Cardiac septum (tissue), 1 donor: ENCODE measurements at regions of chr9 and their contacts with region 1.

Region 1: GRCh38 chr9:112900488-112900887 is 9.8 kb upstream of the SLC46A2 start:
- DNase-seq: no peak

Region 2: DNA sequence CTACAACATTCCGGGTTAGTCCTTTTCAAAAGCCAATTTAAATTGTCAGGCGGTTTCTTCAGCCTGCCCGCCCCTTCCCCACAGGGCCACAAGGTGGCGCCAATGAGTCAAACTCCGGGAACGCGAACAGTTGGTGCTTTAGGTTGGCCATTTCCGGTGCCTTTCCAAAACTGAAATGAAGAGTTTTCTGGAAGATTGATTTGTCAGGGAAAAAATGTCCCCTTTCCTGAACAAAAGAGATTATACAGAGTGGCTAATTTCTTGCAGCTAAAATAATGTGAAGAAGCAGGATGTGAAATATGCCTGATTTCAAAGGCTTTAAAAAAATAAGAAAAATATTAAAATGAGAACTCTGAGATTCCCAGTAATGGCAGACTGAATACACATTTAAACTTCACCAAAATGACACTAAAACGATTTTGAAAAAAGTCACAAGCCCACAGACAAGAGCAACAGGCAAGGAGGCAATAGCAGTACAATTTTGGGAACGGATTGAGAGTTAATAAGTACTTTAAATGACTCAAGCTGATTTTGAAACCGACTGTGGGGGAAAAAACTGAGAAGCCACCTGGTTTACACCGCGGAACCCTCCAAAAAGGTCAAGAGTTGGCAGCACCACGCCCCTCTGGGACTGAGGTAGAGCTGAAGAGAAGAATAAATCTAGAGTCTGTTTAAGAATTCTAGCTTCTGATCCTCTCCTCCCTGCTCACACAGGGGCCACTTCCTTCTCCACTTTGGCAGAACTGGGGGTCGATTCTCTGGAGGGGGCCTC is 55.5 kb before region 1 on chr9:
- intact Hi-C with region 1: loop called (anchors 5 kb)
- DNase-seq: peak; percentile 90